K562 (cell line): ENCODE measurements at regions of chr14 and their contacts with region 1.

Region 1: DNA sequence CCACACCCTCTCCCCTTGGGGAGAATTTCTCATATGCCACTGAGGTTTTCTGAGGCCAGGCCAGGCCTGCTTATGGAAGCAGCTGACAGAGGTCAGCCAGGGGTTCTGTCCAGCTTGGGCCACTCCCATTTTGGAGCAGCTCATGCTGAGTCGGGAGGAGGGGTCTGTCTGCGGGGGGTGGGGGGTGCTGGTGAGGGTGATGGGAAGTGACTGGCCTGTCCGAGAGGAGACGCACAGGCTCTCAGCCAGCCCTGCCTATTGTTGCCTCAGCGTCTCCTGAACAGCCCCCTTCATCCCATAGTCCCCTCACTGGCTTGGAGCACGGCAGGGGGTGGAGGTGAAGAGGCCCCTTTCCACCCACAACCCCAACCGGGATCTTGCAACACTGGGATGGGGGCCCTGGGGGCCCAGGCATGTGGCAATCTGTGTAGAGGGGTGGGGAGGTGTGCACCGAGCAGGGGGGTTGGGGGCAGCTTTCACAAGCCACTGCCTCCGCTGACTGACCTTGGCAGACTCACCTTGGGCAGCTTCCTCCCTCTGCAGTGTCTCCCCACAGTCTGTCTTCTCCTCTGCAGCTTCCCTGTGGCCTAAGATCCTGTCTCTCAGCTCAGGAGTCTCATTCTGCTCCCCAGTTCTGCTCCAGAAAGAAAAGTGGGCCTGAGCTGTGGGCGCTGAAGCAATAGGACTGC is 5.5 kb downstream of the CEBPE start:
- DNase-seq: peak in 2 of 4 experiments; percentile 42 to 52
- ATAC-seq: no peak
- H3K4me3 ChIP-seq: no peak overlapping the region
- H3K27ac ChIP-seq: no peak overlapping the region
- H3K4me1 ChIP-seq: peaks cover 26 to 48% of the 10 kb centered on the region in 2 experiments
- H3K27me3 ChIP-seq: peaks cover 0 to 13% of the 10 kb centered on the region in 2 experiments; a peak in 3 of 5 replicates
- CTCF ChIP-seq: no peak
- EP300 ChIP-seq: no peak
- POLR2A ChIP-seq: no peak
- RAD21 ChIP-seq: no peak

Region 2: DNA sequence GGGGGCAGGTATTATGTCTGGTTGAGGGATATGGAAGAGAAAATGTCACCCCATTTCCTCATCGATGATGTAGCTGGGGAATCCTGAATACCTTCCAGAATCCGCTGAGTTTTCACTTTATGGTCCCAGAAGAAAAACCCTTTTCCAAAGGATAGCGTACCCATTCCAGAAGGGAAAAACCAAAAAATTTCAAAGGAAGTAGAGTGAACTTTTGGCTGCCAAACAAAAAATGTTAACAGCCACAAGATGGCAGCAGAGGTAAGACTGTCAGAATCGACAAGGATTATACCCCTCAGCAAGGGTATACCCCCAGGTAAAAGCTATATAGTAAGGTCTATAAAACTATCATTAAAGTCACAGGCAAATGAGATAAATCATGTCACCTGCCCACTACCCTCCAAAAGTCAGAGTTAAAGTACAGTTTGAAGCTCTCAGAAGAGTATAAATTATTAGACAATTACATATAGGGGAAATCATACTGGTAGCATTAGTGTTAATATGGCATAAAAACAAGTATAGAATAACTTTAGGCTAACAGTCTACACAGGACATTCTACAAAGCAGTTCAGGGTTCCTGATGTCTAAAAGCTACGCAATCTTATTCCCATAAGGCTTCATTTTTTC is 36.7 kb before region 1 on chr14:
- CTCF ChIA-PET with region 1: interaction called, 109 read pairs
- POLR2A ChIA-PET with region 1: interaction called, 8 read pairs
- in situ Hi-C with region 1: no loop called
- intact Hi-C with region 1: no loop called
- DNase-seq: peak in 1 of 4 experiments; percentile 59
- ATAC-seq: peak; percentile 30; the same call in 2 of the 3 replicates
- H3K4me3 ChIP-seq: no peak overlapping the region
- H3K27ac ChIP-seq: no peak overlapping the region
- H3K4me1 ChIP-seq: peaks cover 17 to 40% of the 10 kb centered on the region in 2 experiments
- H3K27me3 ChIP-seq: no peaks in the 10 kb centered on the region
- CTCF ChIP-seq: peak; percentile 45 to 70 (median 68); a peak in 5 of 6 replicates
- EP300 ChIP-seq: no peak
- POLR2A ChIP-seq: no peak
- RAD21 ChIP-seq: peak; percentile 20 to 60

Region 3: GRCh38 chr14:23095196-23096108 is 18.1 kb before region 1 on chr14 and contains the start of gene C14orf119:
- CTCF ChIA-PET with region 1: no interaction called
- POLR2A ChIA-PET with region 1: interaction called, 17 read pairs
- in situ Hi-C with region 1: no loop called
- intact Hi-C with region 1: no loop called
- DNase-seq: peak; percentile 88 to 99 (median 96)
- ATAC-seq: peak; percentile 91
- H3K4me3 ChIP-seq: peak within 1 kb of the TSS; percentile 83
- H3K27ac ChIP-seq: peak within 1 kb of the TSS; percentile 98
- H3K4me1 ChIP-seq: peaks cover 8 to 29% of the 10 kb centered on the region in 2 experiments; a peak in 4 of 5 replicates
- H3K27me3 ChIP-seq: no peaks in the 10 kb centered on the region
- CTCF ChIP-seq: no peak
- EP300 ChIP-seq: peak; percentile 37; the same call in 1 of the 2 replicates
- POLR2A ChIP-seq: peak; percentile 89
- RAD21 ChIP-seq: no peak
- polyA plus RNA-seq, gene C14orf119: 249 to 251 TPM

Region 4: DNA sequence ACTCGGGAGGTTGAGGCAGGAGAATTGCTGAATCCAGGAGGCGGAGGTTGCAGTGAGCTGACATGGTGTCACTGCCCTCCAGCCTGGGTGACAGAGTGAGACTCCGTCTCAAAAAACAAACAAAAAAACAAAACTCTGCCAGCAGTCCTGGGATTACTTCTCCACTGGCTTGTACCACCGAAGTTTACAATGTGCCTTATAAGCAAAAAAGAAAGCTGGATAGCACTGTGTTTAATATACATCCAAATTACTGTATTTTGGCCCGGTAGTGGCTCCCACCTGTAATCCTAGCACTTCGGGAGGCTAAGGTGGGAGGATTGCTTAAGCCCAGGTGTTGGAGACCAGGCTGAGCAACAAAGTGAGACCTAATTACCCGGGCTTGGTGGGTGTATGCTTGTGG is 155.6 kb after region 1 on chr14:
- CTCF ChIA-PET with region 1: no interaction called
- POLR2A ChIA-PET with region 1: no interaction called
- in situ Hi-C with region 1: no loop called
- intact Hi-C with region 1: no loop called
- DNase-seq: no peak
- ATAC-seq: no peak
- H3K4me3 ChIP-seq: no peak overlapping the region
- H3K27ac ChIP-seq: no peak overlapping the region
- H3K4me1 ChIP-seq: peaks cover 2 to 3% of the 10 kb centered on the region in 2 experiments; a peak in 2 of 5 replicates
- H3K27me3 ChIP-seq: no peaks in the 10 kb centered on the region
- CTCF ChIP-seq: no peak
- EP300 ChIP-seq: no peak
- POLR2A ChIP-seq: no peak
- RAD21 ChIP-seq: no peak